Natural killer cell (primary cell): ENCODE measurements at regions of chr7 and their contacts with region 1.

Region 1: DNA sequence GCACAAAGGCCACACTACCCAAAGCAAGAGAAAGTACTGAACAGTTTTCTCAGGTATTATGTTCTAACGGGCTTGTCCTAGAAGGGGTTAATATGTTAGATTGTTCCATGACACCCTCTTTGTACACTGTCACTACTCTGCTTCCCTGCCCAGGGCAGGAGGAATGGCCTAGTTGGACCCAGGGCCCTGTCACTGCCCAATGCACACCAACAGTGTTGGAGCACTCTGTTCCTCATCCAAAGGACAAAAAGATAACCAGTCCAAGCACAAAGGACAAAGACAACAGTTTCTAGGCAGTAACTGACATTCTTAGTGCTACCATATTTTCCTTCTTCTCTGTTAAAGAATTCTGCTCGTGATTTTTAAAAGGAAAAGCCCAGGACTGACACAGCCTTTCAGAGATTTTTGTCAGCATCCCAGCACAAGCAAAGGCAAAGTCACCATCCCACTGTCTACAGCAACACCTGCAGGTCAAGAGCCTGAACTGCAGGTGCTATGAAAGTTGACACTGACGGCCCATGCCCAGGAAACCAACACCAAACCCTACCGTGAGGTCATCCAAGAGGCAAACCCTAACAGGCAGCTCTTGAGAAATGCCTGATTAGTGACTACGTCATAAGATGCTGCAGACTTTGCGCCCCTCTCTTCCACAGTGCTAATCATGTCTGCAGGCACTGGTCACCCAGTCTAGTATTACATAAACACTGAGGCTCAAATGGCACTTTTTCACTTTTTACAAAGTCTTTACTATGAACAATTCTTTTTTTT is 13.2 kb downstream of the NUDCD3 start:
- DNase-seq: peak; percentile 66 to 84
- ATAC-seq: peak; percentile 96 to 99 (median 99)
- H3K4me3 ChIP-seq: no peak overlapping the region
- H3K4me3 Mint-ChIP-seq: no peak overlapping the region
- H3K27ac ChIP-seq: no peak overlapping the region
- H3K27ac Mint-ChIP-seq: peak overlapping the region; percentile 14 to 18
- H3K4me1 ChIP-seq: peaks cover 5% of the 10 kb centered on the region
- H3K4me1 Mint-ChIP-seq: peaks cover 8 to 21% of the 10 kb centered on the region in 2 donors
- H3K27me3 ChIP-seq: no peaks in the 10 kb centered on the region
- H3K27me3 Mint-ChIP-seq: no peaks in the 10 kb centered on the region
- CTCF ChIP-seq: peak; percentile 97

Region 2: GRCh38 chr7:44240983-44241510 is 236.2 kb before region 1 on chr7:
- intact Hi-C with region 1: loop called (anchors 1 kb)
- DNase-seq: peak; percentile 46 to 79
- ATAC-seq: peak; percentile 73 to 93 (median 90)
- H3K4me3 ChIP-seq: no peak overlapping the region
- H3K4me3 Mint-ChIP-seq: no peak overlapping the region
- H3K27ac ChIP-seq: no peak overlapping the region
- H3K27ac Mint-ChIP-seq: peak overlapping the region in 1 of 2 donors; percentile 59
- H3K4me1 ChIP-seq: peaks cover 7% of the 10 kb centered on the region
- H3K4me1 Mint-ChIP-seq: no peaks in the 10 kb centered on the region
- H3K27me3 ChIP-seq: no peaks in the 10 kb centered on the region
- H3K27me3 Mint-ChIP-seq: no peaks in the 10 kb centered on the region
- CTCF ChIP-seq: peak; percentile 52

Region 3: DNA sequence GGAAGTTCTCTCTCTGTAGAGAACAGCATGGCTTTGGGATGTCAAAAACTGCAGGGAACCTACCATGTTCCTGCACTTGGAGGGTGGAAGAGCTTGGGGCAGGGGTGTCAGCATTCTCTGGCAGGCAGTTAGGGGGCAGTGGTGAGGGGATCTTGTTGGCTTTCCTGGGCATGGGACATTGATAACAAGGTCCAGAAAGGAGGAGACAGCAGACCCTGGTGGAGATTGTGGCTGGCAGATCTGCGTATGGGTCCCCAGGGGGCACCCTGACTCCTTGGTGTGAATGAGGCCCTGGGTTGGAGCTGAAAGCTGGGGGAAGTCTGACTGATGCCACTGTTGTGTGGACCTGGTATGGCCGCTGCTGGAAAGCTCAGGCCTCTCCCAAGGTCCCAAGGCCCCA is 128.9 kb before region 1 on chr7:
- intact Hi-C with region 1: loop called (anchors 1 kb)
- DNase-seq: peak in 1 of 2 donors; percentile 36
- ATAC-seq: no peak
- H3K4me3 ChIP-seq: no peak overlapping the region
- H3K4me3 Mint-ChIP-seq: no peak overlapping the region
- H3K27ac ChIP-seq: no peak overlapping the region
- H3K27ac Mint-ChIP-seq: no peak overlapping the region
- H3K4me1 ChIP-seq: no peaks in the 10 kb centered on the region
- H3K4me1 Mint-ChIP-seq: no peaks in the 10 kb centered on the region
- H3K27me3 ChIP-seq: no peaks in the 10 kb centered on the region
- H3K27me3 Mint-ChIP-seq: peaks cover 15 to 57% of the 10 kb centered on the region in 2 donors
- CTCF ChIP-seq: no peak

Region 4: DNA sequence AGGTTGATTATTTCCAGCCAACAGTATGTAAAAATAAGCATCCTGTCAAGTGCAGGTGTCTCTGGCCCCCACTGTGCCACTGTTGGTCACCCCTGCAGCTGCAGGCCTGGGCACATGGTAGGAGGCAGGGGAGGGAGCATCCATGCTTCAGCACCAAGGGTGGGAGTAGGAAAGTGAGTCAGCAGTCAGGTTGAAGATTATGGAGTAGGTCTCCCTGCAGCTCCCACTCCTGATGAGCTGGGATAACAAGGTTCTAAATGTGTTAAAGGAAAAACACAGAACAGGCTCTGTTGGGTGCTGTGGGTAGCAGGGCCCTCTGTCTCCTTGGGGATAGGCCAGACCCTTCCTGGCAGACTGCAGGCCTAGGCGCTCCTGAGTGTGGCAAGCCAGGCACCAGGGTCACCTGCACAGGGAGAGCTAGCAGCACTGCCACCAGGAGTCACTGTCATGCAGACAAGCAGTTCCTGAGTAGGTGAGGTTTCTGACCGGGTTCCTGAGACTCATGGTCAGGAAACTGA is 46.1 kb before region 1 on chr7:
- intact Hi-C with region 1: loop called (anchors 5 kb)
- DNase-seq: peak in 1 of 2 donors; percentile 54
- ATAC-seq: peak in 1 of 3 donors; percentile 53
- H3K4me3 ChIP-seq: no peak overlapping the region
- H3K4me3 Mint-ChIP-seq: no peak overlapping the region
- H3K27ac ChIP-seq: no peak overlapping the region
- H3K27ac Mint-ChIP-seq: no peak overlapping the region
- H3K4me1 ChIP-seq: no peaks in the 10 kb centered on the region
- H3K4me1 Mint-ChIP-seq: peaks cover 22 to 38% of the 10 kb centered on the region in 2 donors
- H3K27me3 ChIP-seq: no peaks in the 10 kb centered on the region
- H3K27me3 Mint-ChIP-seq: no peaks in the 10 kb centered on the region
- CTCF ChIP-seq: no peak

Region 5: DNA sequence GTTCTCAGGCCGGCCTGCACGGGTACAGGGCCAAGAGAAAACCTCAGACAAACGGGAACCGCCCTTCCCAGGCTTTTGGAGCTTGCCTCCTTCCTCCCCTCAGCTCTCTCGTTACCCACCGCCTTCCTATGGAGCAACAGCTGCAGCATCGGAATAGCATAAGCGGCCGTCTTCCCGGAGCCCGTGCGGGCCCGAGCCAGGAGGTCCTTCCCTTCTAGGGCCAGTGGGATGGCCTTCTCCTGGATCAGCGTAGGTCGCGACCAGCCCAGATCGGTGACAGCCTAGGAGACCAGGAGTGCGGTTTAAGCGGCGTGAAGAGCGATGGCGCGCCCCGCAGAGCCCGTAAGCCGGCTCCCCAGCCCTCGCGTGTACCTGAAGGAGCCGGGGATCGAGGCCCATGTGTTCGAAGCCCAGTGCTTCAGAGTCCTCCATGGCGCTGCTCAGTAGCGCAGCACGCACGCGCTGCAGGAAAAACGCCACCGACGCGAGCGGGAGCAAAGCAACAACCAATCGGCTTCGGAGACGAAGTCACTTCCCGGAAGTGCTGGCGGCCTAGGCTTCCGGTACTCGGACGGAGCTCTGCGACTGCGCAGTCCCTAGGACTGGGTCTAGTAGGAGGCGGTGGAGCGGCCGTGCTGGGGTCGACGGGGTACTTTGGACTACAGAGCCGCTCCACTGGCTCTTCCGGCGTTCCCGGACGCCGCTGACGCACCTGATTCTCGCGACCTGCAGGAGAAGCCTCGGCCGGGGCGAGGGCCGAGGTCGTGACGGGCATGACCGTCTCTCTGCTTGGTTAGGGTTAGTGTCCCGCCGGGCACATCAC is 96.4 kb after region 1 on chr7 and contains the start of gene DDX56:
- intact Hi-C with region 1: no loop called
- DNase-seq: peak; percentile 85 to 97
- ATAC-seq: peak; percentile 95
- H3K4me3 ChIP-seq: peak within 1 kb of the TSS; percentile 76
- H3K4me3 Mint-ChIP-seq: peak within 1 kb of the TSS; percentile 96
- H3K27ac ChIP-seq: peak within 1 kb of the TSS; percentile 89
- H3K27ac Mint-ChIP-seq: peak within 1 kb of the TSS; percentile 98 to 100
- H3K4me1 ChIP-seq: peaks cover 22% of the 10 kb centered on the region
- H3K4me1 Mint-ChIP-seq: peaks cover 31 to 36% of the 10 kb centered on the region in 2 donors
- H3K27me3 ChIP-seq: no peaks in the 10 kb centered on the region
- H3K27me3 Mint-ChIP-seq: no peaks in the 10 kb centered on the region
- CTCF ChIP-seq: no peak
- total RNA-seq, gene DDX56: 67.8 to 85.5 (median 84.5) TPM